PC-9 (cell line): ENCODE measurements at regions of chr4 and their contacts with region 1.

Region 1: GRCh38 chr4:186845137-186845842 is 121.6 kb upstream of the FAT1 start:
- DNase-seq: peak; percentile 53 to 74
- H3K4me3 ChIP-seq: no peak overlapping the region
- H3K27ac ChIP-seq: peak overlapping the region; percentile 49
- H3K4me1 ChIP-seq: peaks cover 20% of the 10 kb centered on the region
- H3K27me3 ChIP-seq: no peaks in the 10 kb centered on the region
- CTCF ChIP-seq: no peak

Region 2: GRCh38 chr4:186554539-186554913 is 290.8 kb before region 1 on chr4:
- CTCF ChIA-PET with region 1: no interaction called
- POLR2A ChIA-PET with region 1: no interaction called
- intact Hi-C with region 1: no loop called
- DNase-seq: no peak
- H3K4me3 ChIP-seq: no peak overlapping the region
- H3K27ac ChIP-seq: no peak overlapping the region
- H3K4me1 ChIP-seq: no peaks in the 10 kb centered on the region
- H3K27me3 ChIP-seq: peaks cover 16% of the 10 kb centered on the region
- CTCF ChIP-seq: no peak

Region 3: GRCh38 chr4:186904101-186904500 is 58.8 kb after region 1 on chr4:
- CTCF ChIA-PET with region 1: no interaction called
- POLR2A ChIA-PET with region 1: no interaction called
- intact Hi-C with region 1: loop called (anchors 5 kb)
- DNase-seq: peak in 1 of 2 experiments; percentile 73
- H3K4me3 ChIP-seq: no peak overlapping the region
- H3K27ac ChIP-seq: no peak overlapping the region
- H3K4me1 ChIP-seq: peaks cover 11% of the 10 kb centered on the region
- H3K27me3 ChIP-seq: no peaks in the 10 kb centered on the region
- CTCF ChIP-seq: no peak

Region 4: GRCh38 chr4:187027272-187027671 is 182.0 kb after region 1 on chr4:
- CTCF ChIA-PET with region 1: no interaction called
- POLR2A ChIA-PET with region 1: no interaction called
- intact Hi-C with region 1: no loop called
- DNase-seq: no peak
- H3K4me3 ChIP-seq: no peak overlapping the region
- H3K27ac ChIP-seq: no peak overlapping the region
- H3K4me1 ChIP-seq: no peaks in the 10 kb centered on the region
- H3K27me3 ChIP-seq: no peaks in the 10 kb centered on the region
- CTCF ChIP-seq: no peak